ENCODE measurements at regions of chr16 and their contacts with region 1.

Region 1: DNA sequence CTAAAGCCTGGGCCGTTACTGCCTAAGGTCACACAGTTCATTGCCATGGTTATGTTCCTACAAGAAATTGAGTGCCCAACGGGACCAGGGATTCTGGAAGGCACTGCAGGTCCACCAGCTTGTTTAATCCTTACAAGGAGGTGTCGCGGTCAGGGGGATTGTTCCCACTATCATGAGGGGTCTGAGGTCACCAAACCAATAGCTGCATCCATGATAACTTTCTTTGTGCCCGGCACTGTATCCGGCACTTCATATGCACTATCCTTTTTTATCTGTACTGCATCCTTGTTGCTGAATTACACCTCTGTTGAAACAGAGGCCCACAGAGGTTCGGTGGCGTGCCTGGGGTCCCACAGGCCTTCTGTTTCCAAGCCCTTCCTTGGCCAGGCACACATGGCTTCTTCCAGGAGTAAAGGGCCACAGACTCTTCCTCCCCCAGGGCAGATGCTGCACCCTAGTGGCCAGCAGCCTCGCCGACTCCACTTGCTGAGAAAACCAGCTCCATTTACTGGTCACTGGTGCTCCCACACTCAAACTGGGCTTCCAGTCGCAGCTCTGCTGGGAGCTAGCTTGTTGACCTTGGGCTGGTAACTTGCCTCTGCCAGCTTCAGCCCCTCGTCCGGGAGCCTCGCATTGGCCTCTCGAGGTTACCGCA is 82.0 kb upstream of the PLCG2 start:
- DNase-seq: no peak
- ATAC-seq: no peak
- H3K4me3 ChIP-seq: no peak overlapping the region
- H3K27ac ChIP-seq: no peak overlapping the region
- H3K4me1 ChIP-seq: peaks cover 0 to 8% of the 10 kb centered on the region in 2 donors
- H3K27me3 ChIP-seq: no peaks in the 10 kb centered on the region
- CTCF ChIP-seq: peak in 4 of 5 experiments; percentile 42 to 58 (median 49)
- POLR2A ChIP-seq: no peak

Region 2: GRCh38 chr16:81623363-81624102 is 73.6 kb before region 1 on chr16:
- in situ Hi-C with region 1: no loop called
- intact Hi-C with region 1: loop called (anchors 10 kb)
- DNase-seq: no peak
- ATAC-seq: no peak
- H3K4me3 ChIP-seq: no peak overlapping the region
- H3K27ac ChIP-seq: no peak overlapping the region
- H3K4me1 ChIP-seq: peaks cover 0 to 12% of the 10 kb centered on the region in 2 donors
- H3K27me3 ChIP-seq: no peaks in the 10 kb centered on the region
- CTCF ChIP-seq: peak in 3 of 5 experiments; percentile 33 to 47 (median 45)
- POLR2A ChIP-seq: no peak

Region 3: DNA sequence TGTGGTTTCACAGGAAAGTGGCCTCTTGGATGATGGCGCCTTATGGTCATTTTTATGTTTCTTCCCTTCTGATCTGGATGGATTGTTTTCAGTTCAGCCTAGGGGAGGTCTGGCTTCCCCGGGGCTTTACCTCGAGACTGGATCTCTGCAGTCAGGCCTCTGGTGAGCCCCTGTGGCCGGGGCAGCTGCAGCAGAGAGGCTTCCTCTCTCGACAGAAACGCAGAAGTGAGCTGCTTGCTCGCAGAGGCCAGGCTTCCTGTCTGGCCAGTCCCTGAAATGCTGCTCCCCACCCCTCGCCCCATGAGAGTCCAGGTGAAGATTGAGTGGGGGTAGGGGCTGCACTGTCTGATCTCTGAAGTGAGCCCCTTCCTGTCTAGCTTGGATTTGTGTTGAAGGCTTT is 126.0 kb after region 1 on chr16:
- in situ Hi-C with region 1: no loop called
- intact Hi-C with region 1: no loop called
- DNase-seq: peak; percentile 7 to 24
- ATAC-seq: no peak
- H3K4me3 ChIP-seq: no peak overlapping the region
- H3K27ac ChIP-seq: no peak overlapping the region
- H3K4me1 ChIP-seq: no peaks in the 10 kb centered on the region
- H3K27me3 ChIP-seq: no peaks in the 10 kb centered on the region
- CTCF ChIP-seq: no peak
- POLR2A ChIP-seq: no peak